Calu3 (cell line): ENCODE measurements at regions of chr20 and their contacts with region 1.

Region 1: GRCh38 chr20:8853805-8854338 is 215.0 kb upstream of the PLCB4 start:
- DNase-seq: peak; percentile 18
- H3K4me3 Mint-ChIP-seq: no peak overlapping the region
- H3K27ac Mint-ChIP-seq: no peak overlapping the region
- H3K4me1 Mint-ChIP-seq: no peaks in the 10 kb centered on the region
- H3K27me3 Mint-ChIP-seq: no peaks in the 10 kb centered on the region
- CTCF ChIP-seq: peak; percentile 39

Region 2: GRCh38 chr20:8909596-8909995 is 55.7 kb after region 1 on chr20:
- CTCF ChIA-PET with region 1: no interaction called
- intact Hi-C with region 1: no loop called
- DNase-seq: no peak
- H3K4me3 Mint-ChIP-seq: no peak overlapping the region
- H3K27ac Mint-ChIP-seq: no peak overlapping the region
- H3K4me1 Mint-ChIP-seq: peaks cover 16% of the 10 kb centered on the region
- H3K27me3 Mint-ChIP-seq: no peaks in the 10 kb centered on the region
- CTCF ChIP-seq: no peak

Region 3: GRCh38 chr20:9068851-9069663 is 215.2 kb after region 1 on chr20 and contains the start of gene PLCB4:
- CTCF ChIA-PET with region 1: interaction called, 6 read pairs
- intact Hi-C with region 1: loop called (anchors 5 kb)
- DNase-seq: peak; percentile 51
- H3K4me3 Mint-ChIP-seq: peak within 1 kb of the TSS; percentile 89
- H3K27ac Mint-ChIP-seq: peak within 1 kb of the TSS; percentile 85
- H3K4me1 Mint-ChIP-seq: peaks cover 25% of the 10 kb centered on the region
- H3K27me3 Mint-ChIP-seq: no peaks in the 10 kb centered on the region
- CTCF ChIP-seq: no peak
- total RNA-seq, gene PLCB4: 9.9 and 12.9 TPM in 2 replicates

Region 4: GRCh38 chr20:9172851-9173250 is 319.0 kb after region 1 on chr20:
- CTCF ChIA-PET with region 1: no interaction called
- intact Hi-C with region 1: loop called (anchors 10 kb)
- DNase-seq: no peak
- H3K4me3 Mint-ChIP-seq: no peak overlapping the region
- H3K27ac Mint-ChIP-seq: no peak overlapping the region
- H3K4me1 Mint-ChIP-seq: peaks cover 10% of the 10 kb centered on the region
- H3K27me3 Mint-ChIP-seq: no peaks in the 10 kb centered on the region
- CTCF ChIP-seq: no peak